Activated CD8-positive, alpha-beta memory T cell treated with anti-CD3 and anti-CD28 coated beads, Interleukin-2, amount 10 ng/mL, durations not matched to agents 7 days and 5 days (primary cell): ENCODE measurements at regions of chr1 and their contacts with region 1.

Region 1: DNA sequence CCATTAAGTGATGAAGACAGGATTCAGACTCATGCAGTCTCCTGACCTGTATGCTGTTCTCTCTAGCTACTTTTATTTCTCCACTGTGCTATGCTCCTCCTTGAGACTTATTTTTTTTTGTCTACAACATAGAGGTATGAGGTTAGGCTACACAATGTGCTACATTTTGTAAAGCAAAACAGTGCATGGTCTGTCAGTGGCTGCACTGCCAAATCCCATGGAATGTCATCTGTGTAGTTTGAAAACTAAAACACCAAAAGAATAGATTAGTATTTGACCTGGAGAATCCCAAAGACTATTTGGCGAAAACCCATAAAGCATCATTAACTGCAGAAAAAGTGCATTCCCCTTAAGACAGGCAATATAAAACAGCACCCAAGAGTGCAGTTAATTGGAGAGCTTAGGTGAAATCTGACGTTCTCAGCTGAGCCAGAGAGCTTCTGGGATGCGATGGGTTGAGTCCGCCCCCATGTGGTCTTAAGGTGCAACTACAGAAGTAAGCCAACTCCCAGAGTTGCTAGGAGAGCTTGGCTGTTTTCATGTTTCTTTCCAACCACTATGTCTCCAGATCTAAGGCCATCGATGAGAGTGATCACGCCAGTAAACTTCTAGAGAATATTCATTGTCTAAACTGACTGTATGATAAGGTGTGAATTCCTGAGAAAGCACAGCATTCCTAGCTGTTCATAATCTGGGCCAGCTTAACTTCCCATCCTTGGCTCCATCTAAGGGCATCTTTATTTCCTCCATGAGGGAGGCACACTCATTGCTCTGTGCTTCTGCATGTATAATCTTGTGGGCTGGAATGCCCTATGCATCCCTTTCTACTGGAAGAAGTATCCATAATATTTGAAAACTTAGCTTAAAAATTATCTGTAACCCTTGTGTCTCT is 20.7 kb upstream of the CYP2J2 start:
- DNase-seq: peak; percentile 68
- ATAC-seq: peak; percentile 84
- H3K4me3 Mint-ChIP-seq: no peak overlapping the region
- H3K27ac Mint-ChIP-seq: no peak overlapping the region
- H3K4me1 Mint-ChIP-seq: no peaks in the 10 kb centered on the region
- H3K27me3 Mint-ChIP-seq: peaks cover 23% of the 10 kb centered on the region

Region 2: GRCh38 chr1:59672851-59673572 is 274.3 kb before region 1 on chr1:
- CTCF ChIA-PET with region 1: no interaction called
- DNase-seq: no peak
- ATAC-seq: no peak
- H3K4me3 Mint-ChIP-seq: no peak overlapping the region
- H3K27ac Mint-ChIP-seq: no peak overlapping the region
- H3K4me1 Mint-ChIP-seq: no peaks in the 10 kb centered on the region
- H3K27me3 Mint-ChIP-seq: no peaks in the 10 kb centered on the region

Region 3: DNA sequence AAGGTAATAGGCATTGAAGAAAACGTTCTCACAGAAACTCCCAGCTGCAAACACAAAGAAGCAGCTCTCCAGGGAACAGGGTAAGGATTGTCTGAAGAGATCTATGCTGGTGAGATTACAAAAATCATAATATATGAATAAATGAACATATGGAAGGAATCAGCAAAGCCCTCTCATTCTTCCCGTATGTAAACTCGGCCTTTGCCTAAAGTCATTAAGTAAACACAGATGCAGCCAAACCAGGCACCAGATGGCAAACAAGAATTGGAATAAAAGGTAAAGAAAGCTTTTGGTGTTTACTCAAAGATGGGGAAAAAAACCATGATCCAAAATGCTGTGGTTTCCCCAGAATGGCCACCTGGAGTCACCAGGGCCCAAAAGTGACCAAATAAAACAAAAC is 209.1 kb before region 1 on chr1:
- CTCF ChIA-PET with region 1: no interaction called
- DNase-seq: no peak
- ATAC-seq: no peak
- H3K4me3 Mint-ChIP-seq: no peak overlapping the region
- H3K27ac Mint-ChIP-seq: no peak overlapping the region
- H3K4me1 Mint-ChIP-seq: peaks cover 3% of the 10 kb centered on the region
- H3K27me3 Mint-ChIP-seq: no peaks in the 10 kb centered on the region

Region 4: DNA sequence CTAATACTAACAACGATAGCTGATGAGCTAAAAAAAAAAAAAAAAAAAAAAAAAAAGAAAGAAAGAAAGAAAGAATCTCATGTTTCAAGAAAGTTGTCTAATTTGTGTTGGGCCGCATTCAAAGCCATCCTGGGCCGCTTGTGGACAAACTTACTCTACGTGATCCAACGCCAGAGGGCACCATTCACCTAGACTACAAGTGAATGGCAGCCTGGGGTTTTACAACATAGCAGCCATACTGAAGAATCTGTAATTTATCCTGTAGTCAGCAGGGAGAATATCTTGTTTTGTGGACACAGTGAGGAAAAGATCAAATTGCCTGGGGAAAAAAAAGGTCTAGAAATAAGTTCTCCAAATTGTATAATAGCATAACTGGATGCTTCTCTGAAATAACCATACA is 67.7 kb before region 1 on chr1:
- CTCF ChIA-PET with region 1: interaction called, 36 read pairs
- DNase-seq: peak; percentile 67
- ATAC-seq: no peak
- H3K4me3 Mint-ChIP-seq: no peak overlapping the region
- H3K27ac Mint-ChIP-seq: no peak overlapping the region
- H3K4me1 Mint-ChIP-seq: no peaks in the 10 kb centered on the region
- H3K27me3 Mint-ChIP-seq: peaks cover 2% of the 10 kb centered on the region

Region 5: GRCh38 chr1:59903141-59903754 is 44.0 kb before region 1 on chr1:
- CTCF ChIA-PET with region 1: interaction called, 20 read pairs
- DNase-seq: peak; percentile 44
- ATAC-seq: peak; percentile 53
- H3K4me3 Mint-ChIP-seq: no peak overlapping the region
- H3K27ac Mint-ChIP-seq: no peak overlapping the region
- H3K4me1 Mint-ChIP-seq: peaks cover 5% of the 10 kb centered on the region
- H3K27me3 Mint-ChIP-seq: no peaks in the 10 kb centered on the region

Region 6: DNA sequence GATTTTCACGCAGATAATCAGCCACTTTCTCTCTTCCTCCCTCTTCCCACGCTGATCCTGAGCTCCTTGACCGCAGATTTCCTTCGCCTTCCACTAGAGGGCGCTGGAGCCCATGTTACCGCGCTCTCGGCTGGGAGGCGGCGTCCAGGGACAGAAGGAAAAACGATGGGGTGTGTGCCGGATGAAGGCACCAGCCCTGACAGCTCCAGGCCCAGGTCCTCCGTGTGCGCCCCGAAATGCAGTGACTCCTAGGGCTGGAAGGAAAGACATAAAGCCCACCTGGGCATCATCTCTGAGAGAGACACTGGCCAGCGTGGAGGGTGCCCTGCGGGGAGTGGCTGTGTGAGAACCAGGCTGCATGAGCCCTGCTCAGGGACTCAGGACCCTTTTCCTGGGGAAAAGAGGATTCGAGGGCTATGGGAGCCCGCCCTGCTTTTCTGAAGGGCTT is 24.2 kb after region 1 on chr1:
- CTCF ChIA-PET with region 1: interaction called, 24 read pairs
- DNase-seq: peak; percentile 50
- ATAC-seq: peak; percentile 49
- H3K4me3 Mint-ChIP-seq: no peak overlapping the region
- H3K27ac Mint-ChIP-seq: no peak overlapping the region
- H3K4me1 Mint-ChIP-seq: peaks cover 4% of the 10 kb centered on the region
- H3K27me3 Mint-ChIP-seq: peaks cover 16% of the 10 kb centered on the region